Sigmoid colon (tissue), 7 donors: ENCODE measurements at regions of chr19 and their contacts with region 1.

Region 1: DNA sequence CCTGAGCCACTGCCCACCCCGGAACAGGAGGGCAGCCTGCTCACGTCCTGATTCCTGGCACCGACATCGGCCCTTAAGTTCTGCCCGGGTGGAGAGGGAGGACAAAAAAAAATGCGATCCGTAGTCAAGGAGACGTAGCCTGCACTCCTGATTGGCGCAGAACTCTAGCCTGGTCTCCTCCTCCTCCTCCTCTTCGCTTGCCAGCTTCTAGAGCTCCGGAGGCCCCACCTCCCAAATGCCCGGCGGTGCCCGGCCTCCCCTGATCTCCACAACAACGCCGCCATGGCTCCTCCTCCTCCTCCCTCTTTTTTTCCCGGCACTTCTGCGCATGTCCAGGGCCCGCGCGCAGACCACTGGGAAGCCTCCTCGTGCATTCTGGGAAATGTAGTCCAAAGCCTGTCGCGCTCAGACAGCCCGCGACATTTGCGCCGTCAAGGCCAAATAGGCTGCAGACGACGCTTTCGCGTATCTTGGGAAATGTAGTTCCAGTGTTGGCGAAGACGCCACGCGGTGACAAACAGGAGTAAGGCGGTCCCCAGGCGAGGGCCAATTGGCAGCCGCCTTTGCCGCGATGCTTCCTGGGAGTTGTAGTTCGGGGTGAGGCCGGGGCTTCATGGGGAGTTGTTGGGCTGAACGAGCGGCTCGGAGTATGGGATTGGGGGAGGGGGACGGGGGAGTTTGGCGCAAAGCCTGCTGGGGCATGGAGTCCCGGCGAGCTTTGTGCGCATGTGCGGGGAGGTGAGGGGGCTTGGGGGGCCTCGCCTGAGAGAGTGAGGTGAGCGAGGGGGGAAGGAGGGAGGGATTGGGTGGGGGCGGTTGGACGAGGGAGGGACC is at the start of gene ZNF444:
- DNase-seq: peak; percentile 100
- H3K4me3 ChIP-seq: peak within 1 kb of the TSS; percentile 59 to 63 (median 62)
- H3K27ac ChIP-seq: peak within 1 kb of the TSS; percentile 94 to 96 (median 95)
- H3K4me1 ChIP-seq: peaks cover 0 to 25% (median 22%) of the 10 kb centered on the region in 4 donors
- H3K27me3 ChIP-seq: no peaks in the 10 kb centered on the region
- CTCF ChIP-seq: no peak
- EP300 ChIP-seq: no peak
- POLR2A ChIP-seq: peak; percentile 41 to 42
- total RNA-seq, gene ZNF444: 25.3 to 57.4 (median 34.1) TPM

Region 2: DNA sequence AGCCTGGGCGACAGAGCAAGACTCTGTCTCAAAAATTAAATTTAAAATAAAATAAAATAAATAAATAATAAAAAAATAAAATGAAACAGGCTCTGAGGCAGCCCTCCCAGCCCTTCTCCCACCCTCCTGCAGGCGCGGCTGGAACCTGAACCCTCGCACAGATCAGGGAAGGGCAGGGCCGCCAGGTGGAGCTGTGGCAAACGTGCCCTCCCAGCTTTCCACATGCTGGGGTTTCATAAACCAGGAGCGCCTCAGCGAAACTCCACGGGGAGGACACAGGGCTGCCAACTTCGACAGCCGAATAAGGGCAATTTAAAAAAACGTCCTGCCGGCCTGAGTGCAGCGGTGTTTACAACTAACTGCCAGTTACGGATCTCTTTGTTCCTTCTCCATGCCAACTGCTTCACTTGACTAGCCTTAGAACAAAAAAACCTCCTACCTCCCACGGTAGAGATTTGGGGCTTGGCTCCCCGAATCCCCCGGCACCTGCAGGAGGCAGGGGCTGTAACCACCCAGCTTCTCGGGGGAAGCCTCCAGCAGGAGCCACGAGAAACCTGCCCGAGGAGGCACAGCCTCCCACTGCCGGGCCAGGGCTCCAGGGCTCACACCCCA is 35.6 kb before region 1 on chr19:
- intact Hi-C with region 1: loop called (anchors 2 kb)
- DNase-seq: peak; percentile 95
- H3K4me3 ChIP-seq: peak overlapping the region in 3 of 4 donors; percentile 22 to 36 (median 33)
- H3K27ac ChIP-seq: peak overlapping the region; percentile 80 to 89 (median 82)
- H3K4me1 ChIP-seq: peaks cover 0 to 56% (median 56%) of the 10 kb centered on the region in 4 donors
- H3K27me3 ChIP-seq: no peaks in the 10 kb centered on the region
- CTCF ChIP-seq: peak; percentile 71 to 78 (median 78)
- EP300 ChIP-seq: peak in 2 of 4 donors; percentile 10 to 71
- POLR2A ChIP-seq: no peak

Region 3: DNA sequence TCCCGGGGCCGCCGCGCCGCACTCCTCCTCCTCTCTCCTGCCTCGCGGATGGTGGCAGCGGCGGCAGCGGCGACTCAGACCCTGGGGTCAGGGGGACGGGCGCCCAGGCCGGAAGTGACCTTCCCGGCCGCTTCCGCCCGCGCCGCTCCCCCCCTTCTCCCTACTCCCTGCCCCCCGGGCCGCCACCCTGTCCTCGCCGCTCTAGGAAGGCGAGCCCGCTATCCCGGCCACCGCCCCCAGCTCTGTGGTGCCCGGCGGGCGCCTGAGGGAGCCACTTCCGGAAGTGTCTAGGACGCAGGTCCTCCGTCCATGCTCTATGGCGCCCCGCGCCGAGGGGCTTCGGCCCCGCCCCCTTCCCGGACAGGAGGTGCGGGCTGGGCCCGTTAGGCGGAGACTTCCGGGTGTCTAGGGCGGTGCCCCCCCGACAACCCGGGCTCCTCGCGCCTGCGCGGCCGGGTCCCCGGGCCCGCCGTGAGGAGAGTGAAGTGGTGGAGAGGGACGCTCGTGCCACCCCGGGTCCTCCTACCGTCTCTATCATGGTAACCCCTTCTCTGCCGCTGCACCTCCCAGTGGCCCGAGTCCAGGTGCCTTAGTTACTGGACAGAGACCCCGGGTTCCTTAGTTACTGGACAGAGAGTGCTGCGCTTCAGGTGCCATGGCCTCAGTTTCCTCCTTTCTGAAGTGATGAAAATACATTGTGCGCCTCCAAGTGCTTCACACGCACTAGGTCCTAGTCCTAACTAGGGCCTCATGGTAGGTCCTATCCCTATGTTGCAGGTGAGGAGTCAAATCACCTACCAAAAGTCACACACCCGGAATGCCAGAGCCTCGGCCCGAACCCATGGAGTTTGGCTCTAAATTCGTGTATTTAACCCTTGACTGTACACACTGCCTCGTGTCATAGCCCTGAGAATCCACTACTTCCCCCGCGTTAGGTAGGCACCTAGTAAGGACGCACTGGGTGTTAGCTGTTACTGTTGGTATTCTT is 19.3 kb before region 1 on chr19 and contains the start of gene ZNF787:
- intact Hi-C with region 1: loop called (anchors 1 kb)
- DNase-seq: peak; percentile 100
- H3K4me3 ChIP-seq: peak within 1 kb of the TSS; percentile 92 to 95 (median 93)
- H3K27ac ChIP-seq: peak within 1 kb of the TSS; percentile 95 to 98 (median 96)
- H3K4me1 ChIP-seq: peaks cover 0 to 43% (median 32%) of the 10 kb centered on the region in 4 donors
- H3K27me3 ChIP-seq: no peaks in the 10 kb centered on the region
- CTCF ChIP-seq: no peak
- EP300 ChIP-seq: peak in 1 of 4 donors; percentile 5
- POLR2A ChIP-seq: peak in 1 of 2 donors; percentile 22
- total RNA-seq, gene ZNF787: 11.0 to 14.1 (median 12.1) TPM

Region 4: DNA sequence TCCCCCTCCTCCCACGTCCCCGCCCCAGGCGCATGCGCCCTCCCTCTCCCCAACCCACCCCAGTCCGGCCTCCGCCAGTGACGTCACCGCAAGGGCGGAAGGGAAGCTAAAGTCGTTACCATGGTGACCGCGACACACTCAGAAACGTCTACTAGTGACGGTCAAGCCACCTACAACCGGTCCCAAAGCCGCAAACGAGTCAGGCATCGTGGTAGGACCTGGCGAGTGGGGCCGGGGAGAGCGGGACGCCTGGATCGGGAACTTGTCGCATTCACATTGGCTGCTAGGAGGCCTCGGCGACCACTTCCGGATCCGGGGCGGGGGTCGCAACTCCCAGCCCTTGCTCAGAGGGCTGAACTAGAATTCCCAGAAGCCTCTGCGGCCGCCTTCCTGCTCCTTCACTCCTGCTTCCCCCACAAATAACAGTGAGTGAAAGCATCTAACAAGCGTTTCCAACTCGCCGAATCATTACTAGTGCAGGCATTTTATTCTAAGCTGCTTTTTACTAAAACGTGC is 173.8 kb after region 1 on chr19 and contains the start of gene ZSCAN5A:
- intact Hi-C with region 1: loop called (anchors 5 kb)
- DNase-seq: peak; percentile 99
- H3K4me3 ChIP-seq: peak within 1 kb of the TSS; percentile 47 to 76 (median 68)
- H3K27ac ChIP-seq: peak within 1 kb of the TSS; percentile 94 to 97 (median 95)
- H3K4me1 ChIP-seq: peaks cover 0 to 18% (median 11%) of the 10 kb centered on the region in 4 donors
- H3K27me3 ChIP-seq: no peaks in the 10 kb centered on the region
- CTCF ChIP-seq: no peak
- EP300 ChIP-seq: no peak
- POLR2A ChIP-seq: peak; percentile 14 to 40
- total RNA-seq, gene ZSCAN5A: 4.3 to 5.8 (median 5.4) TPM